PC-9 (cell line): ENCODE measurements at regions of chr10 and their contacts with region 1.

Region 1: GRCh38 chr10:73096449-73097304 is at the start of gene P4HA1:
- DNase-seq: peak; percentile 90 to 98
- H3K4me3 ChIP-seq: peak within 1 kb of the TSS; percentile 93
- H3K27ac ChIP-seq: peak within 1 kb of the TSS; percentile 65
- H3K4me1 ChIP-seq: peaks cover 18% of the 10 kb centered on the region
- H3K27me3 ChIP-seq: no peaks in the 10 kb centered on the region
- CTCF ChIP-seq: peak; percentile 68
- total RNA-seq, gene P4HA1: 21.0 and 25.5 TPM in 2 replicates

Region 2: DNA sequence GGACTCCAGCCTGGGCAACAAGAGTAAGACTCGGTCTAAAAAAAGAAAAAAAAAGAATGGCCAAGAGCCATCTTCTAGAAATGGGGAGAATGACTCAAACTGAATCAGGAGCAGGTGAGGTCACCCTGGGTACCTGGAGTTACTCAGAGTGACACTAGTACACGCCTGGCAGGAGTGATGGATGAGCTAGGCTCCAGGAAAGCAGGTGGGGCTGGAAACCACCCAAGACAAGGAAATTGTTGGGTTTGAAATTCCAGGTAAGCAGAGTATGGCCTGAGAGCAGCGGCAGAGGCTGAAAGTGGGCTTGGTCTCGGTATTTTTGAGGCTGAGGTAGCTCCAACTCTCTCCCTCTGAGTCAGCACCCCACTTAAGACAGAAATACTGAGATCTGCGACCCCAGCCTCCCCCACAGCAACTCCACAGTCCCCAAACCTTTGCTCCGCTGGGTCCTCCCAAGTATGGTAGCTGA is 804.4 kb before region 1 on chr10:
- CTCF ChIA-PET with region 1: no interaction called
- POLR2A ChIA-PET with region 1: interaction called, 26 read pairs
- intact Hi-C with region 1: no loop called
- DNase-seq: peak; percentile 91 to 99
- H3K4me3 ChIP-seq: peak overlapping the region; percentile 8; the same call in 1 of the 2 replicates
- H3K27ac ChIP-seq: peak overlapping the region; percentile 93
- H3K4me1 ChIP-seq: peaks cover 54% of the 10 kb centered on the region
- H3K27me3 ChIP-seq: no peaks in the 10 kb centered on the region
- CTCF ChIP-seq: no peak

Region 3: DNA sequence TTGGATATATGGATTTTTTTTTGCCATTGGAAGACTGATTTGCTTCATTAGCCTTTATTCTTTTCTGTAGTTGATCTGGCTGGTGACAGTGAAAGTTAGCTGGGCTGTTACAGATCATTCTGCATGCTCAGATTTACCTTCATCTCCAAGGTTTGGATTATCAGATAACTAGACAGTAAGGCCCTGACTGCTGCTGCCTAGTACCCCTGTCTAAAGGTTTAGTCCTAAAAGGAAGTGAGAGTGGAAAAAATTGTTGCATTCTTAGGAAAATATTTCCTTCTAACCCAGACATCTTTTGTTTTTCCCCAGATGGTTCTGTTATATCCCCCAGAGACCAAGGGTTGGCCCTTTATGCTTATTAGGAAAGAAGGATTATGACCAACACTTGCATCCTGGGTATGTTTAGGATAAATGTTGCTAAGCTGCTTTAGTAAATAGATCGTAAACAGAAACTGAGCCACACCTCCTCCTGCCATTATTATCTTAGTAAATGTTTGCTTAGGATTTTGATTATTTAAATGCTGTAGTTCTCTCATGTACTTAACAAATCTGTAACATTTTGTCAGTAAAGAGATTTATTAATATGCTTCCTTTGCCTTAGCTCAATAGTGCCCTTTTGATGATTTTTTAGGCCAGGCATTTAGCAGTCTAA is 360.4 kb before region 1 on chr10:
- CTCF ChIA-PET with region 1: no interaction called
- POLR2A ChIA-PET with region 1: interaction called, 11 read pairs
- intact Hi-C with region 1: no loop called
- DNase-seq: peak in 1 of 2 experiments; percentile 81
- H3K4me3 ChIP-seq: no peak overlapping the region
- H3K27ac ChIP-seq: peak overlapping the region; percentile 40
- H3K4me1 ChIP-seq: peaks cover 56% of the 10 kb centered on the region
- H3K27me3 ChIP-seq: no peaks in the 10 kb centered on the region
- CTCF ChIP-seq: no peak

Region 4: GRCh38 chr10:73017955-73018480 is 78.7 kb before region 1 on chr10:
- CTCF ChIA-PET with region 1: no interaction called
- POLR2A ChIA-PET with region 1: no interaction called
- intact Hi-C with region 1: no loop called
- DNase-seq: peak in 1 of 2 experiments; percentile 12
- H3K4me3 ChIP-seq: no peak overlapping the region
- H3K27ac ChIP-seq: no peak overlapping the region
- H3K4me1 ChIP-seq: peaks cover 7% of the 10 kb centered on the region; the same call in 1 of the 2 replicates
- H3K27me3 ChIP-seq: no peaks in the 10 kb centered on the region
- CTCF ChIP-seq: no peak

Region 5: DNA sequence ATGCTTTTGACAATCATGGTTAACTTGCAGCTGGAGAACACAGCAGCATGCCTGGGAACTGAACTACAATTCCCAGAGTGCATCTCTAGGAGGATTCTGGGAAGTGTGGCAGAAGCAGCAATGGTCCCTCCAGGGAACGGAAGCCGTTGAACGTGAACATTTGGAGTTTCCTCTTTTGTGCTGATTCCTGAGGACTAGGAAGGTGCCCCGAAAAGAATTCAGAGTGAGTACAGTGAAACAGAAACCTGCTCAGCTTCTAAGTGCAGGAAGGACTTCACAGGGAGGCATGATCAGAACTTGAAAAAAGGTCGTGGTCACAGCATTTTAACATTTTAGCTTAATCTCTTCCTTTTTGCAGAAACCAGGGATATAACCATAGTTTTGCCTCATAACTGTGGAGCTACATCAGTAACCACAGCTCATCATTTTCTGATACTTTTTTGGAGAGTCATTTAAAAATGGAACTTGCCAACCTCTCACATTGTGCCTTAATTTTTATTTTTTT is 13.7 kb after region 1 on chr10 and contains the start of gene NUDT13:
- CTCF ChIA-PET with region 1: interaction called, 8 read pairs
- POLR2A ChIA-PET with region 1: interaction called, 30 read pairs
- intact Hi-C with region 1: loop called (anchors 2 kb)
- DNase-seq: peak; percentile 51 to 54
- H3K4me3 ChIP-seq: peak within 1 kb of the TSS; percentile 59
- H3K27ac ChIP-seq: peak within 1 kb of the TSS; percentile 91
- H3K4me1 ChIP-seq: peaks cover 19% of the 10 kb centered on the region
- H3K27me3 ChIP-seq: no peaks in the 10 kb centered on the region
- CTCF ChIP-seq: no peak
- total RNA-seq, gene NUDT13: 5.2 TPM in 2 replicates

Region 6: GRCh38 chr10:73159038-73159648 is 62.5 kb after region 1 on chr10:
- CTCF ChIA-PET with region 1: interaction called, 6 read pairs
- POLR2A ChIA-PET with region 1: interaction called, 6 read pairs
- intact Hi-C with region 1: loop called (anchors 1 kb)
- DNase-seq: peak; percentile 38 to 39
- H3K4me3 ChIP-seq: no peak overlapping the region
- H3K27ac ChIP-seq: 0 out of 2 replicates have a peak overlapping the region, but pooled peaks have one; percentile 19
- H3K4me1 ChIP-seq: no peaks in the 10 kb centered on the region
- H3K27me3 ChIP-seq: no peaks in the 10 kb centered on the region
- CTCF ChIP-seq: peak; percentile 92

Region 7: GRCh38 chr10:73306171-73306708 is 209.6 kb after region 1 on chr10:
- CTCF ChIA-PET with region 1: no interaction called
- POLR2A ChIA-PET with region 1: no interaction called
- intact Hi-C with region 1: no loop called
- DNase-seq: no peak
- H3K4me3 ChIP-seq: no peak overlapping the region
- H3K27ac ChIP-seq: no peak overlapping the region
- H3K4me1 ChIP-seq: no peaks in the 10 kb centered on the region
- H3K27me3 ChIP-seq: no peaks in the 10 kb centered on the region
- CTCF ChIP-seq: no peak

Region 8: GRCh38 chr10:73650537-73651331 is 554.1 kb after region 1 on chr10:
- CTCF ChIA-PET with region 1: interaction called, 16 read pairs
- POLR2A ChIA-PET with region 1: no interaction called
- intact Hi-C with region 1: no loop called
- DNase-seq: no peak
- H3K4me3 ChIP-seq: no peak overlapping the region
- H3K27ac ChIP-seq: no peak overlapping the region
- H3K4me1 ChIP-seq: no peaks in the 10 kb centered on the region
- H3K27me3 ChIP-seq: no peaks in the 10 kb centered on the region
- CTCF ChIP-seq: no peak

Region 9: GRCh38 chr10:74035303-74035702 is 938.6 kb after region 1 on chr10:
- CTCF ChIA-PET with region 1: no interaction called
- POLR2A ChIA-PET with region 1: no interaction called
- intact Hi-C with region 1: no loop called
- DNase-seq: no peak
- H3K4me3 ChIP-seq: no peak overlapping the region
- H3K27ac ChIP-seq: 0 out of 2 replicates have a peak overlapping the region, but pooled peaks have one; percentile 24
- H3K4me1 ChIP-seq: no peaks in the 10 kb centered on the region
- H3K27me3 ChIP-seq: no peaks in the 10 kb centered on the region
- CTCF ChIP-seq: peak; percentile 44